ENCODE measurements at regions of chr18 and their contacts with region 1.

Region 1: GRCh38 chr18:37537868-37538525 is 27.6 kb downstream of the CELF4 start:
- DNase-seq: peak; percentile 52 to 67
- H3K4me3 ChIP-seq: no peak overlapping the region
- H3K27ac ChIP-seq: no peak overlapping the region
- H3K4me1 ChIP-seq: no peaks in the 10 kb centered on the region
- H3K27me3 ChIP-seq: peaks cover 0 to 32% of the 10 kb centered on the region in 2 donors
- CTCF ChIP-seq: peak; percentile 71 to 76 (median 71)
- POLR2A ChIP-seq: no peak

Region 2: GRCh38 chr18:37346048-37346447 is 191.9 kb before region 1 on chr18:
- intact Hi-C with region 1: loop called (anchors 10 kb)
- DNase-seq: no peak
- H3K4me3 ChIP-seq: no peak overlapping the region
- H3K27ac ChIP-seq: no peak overlapping the region
- H3K4me1 ChIP-seq: no peaks in the 10 kb centered on the region
- H3K27me3 ChIP-seq: peaks cover 0 to 14% of the 10 kb centered on the region in 2 donors
- CTCF ChIP-seq: no peak
- POLR2A ChIP-seq: no peak

Region 3: DNA sequence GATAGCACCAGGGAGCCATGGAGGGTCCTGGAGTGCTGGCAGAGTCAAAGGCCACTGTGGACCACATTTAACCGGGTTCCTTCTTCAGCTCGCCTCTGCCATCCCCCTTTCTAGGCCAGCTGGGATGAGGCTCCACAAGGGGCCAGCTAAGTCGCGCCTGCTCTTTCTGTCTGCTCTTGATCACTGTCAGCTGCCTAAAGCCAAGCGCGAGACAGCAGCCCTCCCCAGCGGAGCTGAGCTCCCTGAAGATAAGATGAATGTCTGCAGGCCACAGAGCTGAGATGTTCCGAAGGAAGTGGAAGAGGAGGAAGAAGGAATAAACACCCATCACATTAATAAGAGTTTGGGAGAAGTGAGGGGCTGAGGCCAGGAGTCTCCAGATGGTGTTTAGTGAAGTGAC is 72.0 kb before region 1 on chr18:
- intact Hi-C with region 1: loop called (anchors 10 kb)
- DNase-seq: no peak
- H3K4me3 ChIP-seq: no peak overlapping the region
- H3K27ac ChIP-seq: no peak overlapping the region
- H3K4me1 ChIP-seq: no peaks in the 10 kb centered on the region
- H3K27me3 ChIP-seq: no peaks in the 10 kb centered on the region
- CTCF ChIP-seq: no peak
- POLR2A ChIP-seq: no peak

Measured in breast epithelium (tissue), 4 donors.